Spleen (tissue), 13 donors: ENCODE measurements at regions of chr1 and their contacts with region 1.

Region 1: GRCh38 chr1:48688102-48688760 is 88.5 kb downstream of the BEND5 start:
- DNase-seq: no peak
- H3K4me3 ChIP-seq: no peak overlapping the region
- H3K27ac ChIP-seq: no peak overlapping the region
- H3K4me1 ChIP-seq: peaks cover 0 to 7% (median 1%) of the 10 kb centered on the region in 6 donors
- H3K27me3 ChIP-seq: no peaks in the 10 kb centered on the region
- CTCF ChIP-seq: peak in 5 of 11 experiments; percentile 15 to 29 (median 17)
- POLR2A ChIP-seq: no peak

Region 2: DNA sequence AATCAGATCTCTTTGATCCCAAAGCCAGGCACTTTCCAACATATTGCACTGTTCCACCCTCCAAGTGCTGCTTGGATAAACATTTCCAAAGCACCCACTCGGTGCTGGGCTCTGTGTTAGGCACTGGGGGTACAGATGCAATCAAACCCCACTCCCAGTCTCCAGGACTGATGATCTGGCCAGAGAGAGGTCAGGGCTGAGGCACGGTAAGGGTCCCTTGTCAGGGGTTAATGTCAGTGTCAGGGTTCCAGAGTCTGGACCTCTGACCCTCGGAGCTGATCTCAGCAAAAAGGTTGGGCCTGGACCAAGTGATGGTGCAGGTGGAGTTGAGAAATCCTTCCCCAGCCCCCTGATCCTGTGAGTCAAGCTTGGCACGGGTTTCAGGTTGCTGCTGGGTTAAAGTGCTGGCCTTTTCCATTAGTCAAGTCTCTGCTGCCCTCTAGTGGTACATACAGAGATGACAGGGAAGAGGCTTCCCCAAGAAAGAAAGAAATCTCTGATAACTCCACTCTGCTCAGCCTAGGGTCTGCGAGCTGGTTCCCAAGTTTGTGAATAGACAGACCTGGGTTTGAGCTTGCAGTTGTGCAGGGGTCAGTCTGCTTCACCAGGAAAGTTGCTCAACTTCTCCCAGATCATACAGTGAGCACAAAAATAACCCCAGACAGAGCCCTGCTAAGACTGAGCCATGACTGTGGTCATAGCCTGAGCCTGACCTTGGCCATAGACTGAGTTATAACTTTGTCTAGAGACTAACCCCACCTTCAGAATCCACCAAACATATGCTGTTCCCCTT is 1660.4 kb after region 1 on chr1:
- intact Hi-C with region 1: loop called (anchors 10 kb)
- DNase-seq: no peak
- H3K4me3 ChIP-seq: no peak overlapping the region
- H3K27ac ChIP-seq: no peak overlapping the region
- H3K4me1 ChIP-seq: peaks cover 0 to 3% (median 0%) of the 10 kb centered on the region in 6 donors
- H3K27me3 ChIP-seq: peaks cover 0 to 46% (median 0%) of the 10 kb centered on the region in 7 donors
- CTCF ChIP-seq: peak; percentile 52 to 93 (median 85)
- POLR2A ChIP-seq: no peak